ENCODE measurements at regions of chr11 and their contacts with region 1.

Region 1: DNA sequence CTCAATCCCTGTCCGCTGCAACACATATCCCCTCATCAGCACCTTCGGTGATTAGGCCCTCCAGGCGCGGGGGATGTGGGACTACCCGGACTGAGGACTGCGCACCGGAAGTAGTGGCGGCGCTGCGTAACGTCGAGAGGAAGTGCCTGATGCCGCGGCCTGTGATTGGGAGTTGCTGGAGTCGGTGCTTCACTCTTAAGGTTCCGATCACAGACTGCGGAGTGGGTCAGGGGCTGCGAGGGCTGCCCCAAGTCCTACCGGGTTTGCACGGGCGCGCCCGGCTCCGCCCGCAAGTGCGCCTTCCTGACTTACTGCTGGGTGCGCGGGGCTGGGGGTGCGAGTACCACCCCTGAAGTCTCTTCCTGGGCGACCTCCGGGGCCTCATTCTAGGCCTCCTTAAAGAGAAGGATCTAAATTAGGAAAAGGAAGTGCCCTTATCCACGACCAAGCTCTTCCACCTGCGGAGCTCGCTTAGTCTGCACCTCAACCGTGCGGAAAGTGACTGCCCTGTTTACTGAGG is at the start of gene ALKBH3:
- DNase-seq: peak; percentile 84
- H3K4me3 Mint-ChIP-seq: peak within 1 kb of the TSS; percentile 93
- H3K27ac Mint-ChIP-seq: peak within 1 kb of the TSS; percentile 62
- H3K4me1 Mint-ChIP-seq: peaks cover 20% of the 10 kb centered on the region
- H3K27me3 Mint-ChIP-seq: peaks cover 10% of the 10 kb centered on the region
- total RNA-seq, gene ALKBH3: 32.7 and 38.1 TPM in 2 replicates

Region 2: GRCh38 chr11:43053638-43054412 is 826.9 kb before region 1 on chr11:
- intact Hi-C with region 1: no loop called
- DNase-seq: no peak
- H3K4me3 Mint-ChIP-seq: no peak overlapping the region
- H3K27ac Mint-ChIP-seq: no peak overlapping the region
- H3K4me1 Mint-ChIP-seq: no peaks in the 10 kb centered on the region
- H3K27me3 Mint-ChIP-seq: no peaks in the 10 kb centered on the region

Region 3: DNA sequence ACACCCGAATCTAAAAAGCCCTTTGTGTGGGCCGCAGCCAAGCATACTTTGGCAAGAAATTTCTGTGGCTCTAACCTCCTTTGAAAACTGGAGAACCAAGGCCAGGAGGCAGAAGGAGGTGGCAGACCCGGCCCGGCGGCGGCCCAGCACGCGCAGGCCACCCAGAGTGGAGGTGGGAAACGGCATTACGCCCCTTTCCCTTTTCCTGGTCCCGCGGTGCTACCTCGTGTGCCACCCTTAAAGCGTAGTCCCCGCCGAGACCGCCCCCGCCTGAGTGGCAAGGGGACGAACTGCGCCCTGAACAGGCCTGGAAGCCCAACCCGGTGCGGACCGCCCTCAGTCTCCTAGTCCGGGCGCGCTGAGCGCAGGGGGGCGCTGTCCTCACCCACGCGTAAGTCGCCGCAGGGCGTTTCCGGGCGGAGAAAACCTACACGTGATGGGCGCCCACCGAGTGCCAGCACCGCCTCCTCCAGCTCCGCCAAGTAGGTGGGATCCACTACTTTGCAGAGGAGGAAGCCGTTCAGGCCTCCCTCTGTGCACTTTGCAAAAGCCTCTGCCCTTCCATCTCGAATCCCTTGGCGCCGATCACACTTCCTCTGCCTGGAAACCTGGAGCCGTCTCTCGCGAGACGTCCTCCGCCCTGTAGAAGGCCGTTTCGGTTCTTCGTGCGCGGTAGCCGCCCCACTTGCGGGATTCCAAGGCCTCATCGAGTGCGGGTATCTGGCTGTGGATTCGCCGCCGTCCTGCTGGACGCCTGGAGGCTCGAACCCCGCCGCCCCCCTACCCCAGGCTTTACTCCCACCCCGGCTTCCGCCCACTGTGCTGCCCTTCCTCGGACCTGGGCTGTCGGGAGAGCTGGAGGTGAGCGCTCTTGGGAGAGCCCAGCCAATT is 185.4 kb after region 1 on chr11 and contains the start of gene ACCS:
- intact Hi-C with region 1: loop called (anchors 1 kb)
- DNase-seq: peak; percentile 83
- H3K4me3 Mint-ChIP-seq: peak within 1 kb of the TSS; percentile 91
- H3K27ac Mint-ChIP-seq: peak within 1 kb of the TSS; percentile 94
- H3K4me1 Mint-ChIP-seq: peaks cover 29% of the 10 kb centered on the region
- H3K27me3 Mint-ChIP-seq: peaks cover 4% of the 10 kb centered on the region
- total RNA-seq, gene ACCS: 14.7 and 18.1 TPM in 2 replicates